CD8-positive, alpha-beta T cell (primary cell): ENCODE measurements at regions of chr1 and their contacts with region 1.

Region 1: GRCh38 chr1:61851849-61852669 is 109.8 kb downstream of the PATJ start:
- DNase-seq: peak in 3 of 9 experiments; percentile 17 to 74 (median 67)
- ATAC-seq: peak; percentile 46
- H3K4me3 ChIP-seq: no peak overlapping the region
- H3K4me3 Mint-ChIP-seq: no peak overlapping the region
- H3K27ac ChIP-seq: no peak overlapping the region
- H3K27ac Mint-ChIP-seq: no peak overlapping the region
- H3K4me1 ChIP-seq: no peaks in the 10 kb centered on the region
- H3K4me1 Mint-ChIP-seq: no peaks in the 10 kb centered on the region
- H3K27me3 ChIP-seq: no peaks in the 10 kb centered on the region
- H3K27me3 Mint-ChIP-seq: no peaks in the 10 kb centered on the region
- CTCF ChIP-seq: peak; percentile 94

Region 2: GRCh38 chr1:59971464-59971911 is 1880.6 kb before region 1 on chr1:
- CTCF ChIA-PET with region 1: no interaction called
- POLR2A ChIA-PET with region 1: no interaction called
- intact Hi-C with region 1: loop called in 1 of 2 experiments (anchors 5 kb)
- DNase-seq: peak in 7 of 9 experiments; percentile 15 to 64 (median 44)
- ATAC-seq: no peak
- H3K4me3 ChIP-seq: no peak overlapping the region
- H3K4me3 Mint-ChIP-seq: no peak overlapping the region
- H3K27ac ChIP-seq: no peak overlapping the region
- H3K27ac Mint-ChIP-seq: no peak overlapping the region
- H3K4me1 ChIP-seq: peaks cover 4% of the 10 kb centered on the region
- H3K4me1 Mint-ChIP-seq: peaks cover 7% of the 10 kb centered on the region
- H3K27me3 ChIP-seq: no peaks in the 10 kb centered on the region
- H3K27me3 Mint-ChIP-seq: peaks cover 14% of the 10 kb centered on the region
- CTCF ChIP-seq: peak; percentile 71

Region 3: DNA sequence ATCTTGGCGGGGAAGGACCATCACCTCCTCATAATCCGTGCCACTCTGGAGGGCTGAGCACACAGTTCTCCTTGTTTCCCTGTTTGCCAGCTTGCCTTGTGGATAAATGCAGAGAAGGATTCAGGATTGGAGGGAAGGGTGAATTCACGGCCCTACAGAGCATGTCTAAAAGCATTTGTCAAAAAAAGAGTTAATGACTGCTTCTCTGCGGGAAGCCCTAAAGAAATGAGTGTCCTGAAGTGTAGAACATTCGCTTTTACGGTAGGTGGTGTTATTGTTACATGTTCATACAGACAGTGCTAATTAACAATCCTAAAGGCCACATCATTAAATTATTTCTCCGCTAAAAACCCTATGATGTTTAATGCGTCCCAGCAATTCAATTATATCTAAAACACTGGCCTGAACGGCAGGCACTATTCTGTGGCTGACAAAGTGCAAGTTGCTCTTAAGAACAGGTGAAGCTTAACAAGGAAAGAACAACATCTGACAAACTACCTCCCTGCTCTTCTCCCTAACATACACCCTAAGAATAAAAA is 882.0 kb before region 1 on chr1:
- CTCF ChIA-PET with region 1: no interaction called
- POLR2A ChIA-PET with region 1: no interaction called
- intact Hi-C with region 1: loop called in 1 of 2 experiments (anchors 2 kb)
- DNase-seq: peak in 2 of 9 experiments; percentile 3 to 20
- ATAC-seq: no peak
- H3K4me3 ChIP-seq: no peak overlapping the region
- H3K4me3 Mint-ChIP-seq: no peak overlapping the region
- H3K27ac ChIP-seq: no peak overlapping the region
- H3K27ac Mint-ChIP-seq: no peak overlapping the region
- H3K4me1 ChIP-seq: no peaks in the 10 kb centered on the region
- H3K4me1 Mint-ChIP-seq: no peaks in the 10 kb centered on the region
- H3K27me3 ChIP-seq: no peaks in the 10 kb centered on the region
- H3K27me3 Mint-ChIP-seq: peaks cover 10% of the 10 kb centered on the region
- CTCF ChIP-seq: no peak

Region 4: DNA sequence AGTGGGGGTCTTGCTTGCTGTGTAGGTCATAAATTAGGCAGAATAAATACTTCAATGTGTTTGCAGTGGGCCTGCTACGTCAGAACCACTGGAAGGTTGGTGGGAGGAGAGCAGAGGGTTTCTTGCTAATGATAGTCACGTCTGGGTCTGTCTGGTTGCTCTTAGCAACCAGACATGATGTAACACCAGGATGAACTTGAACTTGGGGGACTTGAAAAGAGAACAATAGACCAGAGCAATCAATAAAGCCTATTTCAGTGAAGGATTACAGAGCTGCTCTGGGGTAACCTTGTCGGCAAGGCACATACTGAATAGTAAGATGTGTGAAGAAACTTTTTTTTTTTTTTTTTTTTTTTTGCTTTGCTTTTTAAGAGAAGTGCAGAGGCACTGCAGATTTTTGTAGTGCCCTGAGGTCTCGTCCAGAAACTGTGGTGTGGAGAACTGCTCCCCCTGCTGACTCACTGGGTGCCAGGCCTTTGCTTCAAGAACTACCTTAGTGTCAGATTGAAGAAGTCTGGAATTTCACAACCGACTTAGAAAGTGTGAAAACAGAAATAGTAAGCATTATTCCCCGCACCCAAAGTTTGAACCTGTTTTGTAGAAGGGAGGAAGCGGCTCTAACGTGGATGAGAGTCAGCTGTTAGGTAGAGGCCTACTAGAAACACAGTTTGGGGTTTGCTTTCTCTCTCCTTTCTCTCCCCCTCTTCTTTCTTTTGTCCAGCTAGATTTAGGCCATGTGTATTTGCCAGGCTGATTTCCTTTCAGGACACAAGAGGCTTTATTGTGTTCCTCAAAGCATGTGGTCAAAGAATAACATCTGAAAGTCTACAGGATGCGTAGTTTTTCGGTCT is 398.7 kb before region 1 on chr1:
- CTCF ChIA-PET with region 1: interaction called, 4 read pairs
- POLR2A ChIA-PET with region 1: no interaction called
- intact Hi-C with region 1: loop called in 1 of 2 experiments (anchors 2 kb)
- DNase-seq: peak; percentile 42 to 81 (median 69)
- ATAC-seq: peak; percentile 87
- H3K4me3 ChIP-seq: no peak overlapping the region
- H3K4me3 Mint-ChIP-seq: no peak overlapping the region
- H3K27ac ChIP-seq: no peak overlapping the region
- H3K27ac Mint-ChIP-seq: peak overlapping the region; percentile 71
- H3K4me1 ChIP-seq: no peaks in the 10 kb centered on the region
- H3K4me1 Mint-ChIP-seq: peaks cover 10% of the 10 kb centered on the region
- H3K27me3 ChIP-seq: no peaks in the 10 kb centered on the region
- H3K27me3 Mint-ChIP-seq: no peaks in the 10 kb centered on the region
- CTCF ChIP-seq: peak; percentile 57

Region 5: GRCh38 chr1:61588736-61589672 is 263.1 kb before region 1 on chr1:
- CTCF ChIA-PET with region 1: interaction called, 5 read pairs
- POLR2A ChIA-PET with region 1: no interaction called
- intact Hi-C with region 1: loop called in 1 of 2 experiments (anchors 2 kb)
- DNase-seq: peak; percentile 14 to 62 (median 39)
- ATAC-seq: peak; percentile 69
- H3K4me3 ChIP-seq: no peak overlapping the region
- H3K4me3 Mint-ChIP-seq: no peak overlapping the region
- H3K27ac ChIP-seq: no peak overlapping the region
- H3K27ac Mint-ChIP-seq: no peak overlapping the region
- H3K4me1 ChIP-seq: no peaks in the 10 kb centered on the region
- H3K4me1 Mint-ChIP-seq: no peaks in the 10 kb centered on the region
- H3K27me3 ChIP-seq: no peaks in the 10 kb centered on the region
- H3K27me3 Mint-ChIP-seq: peaks cover 8% of the 10 kb centered on the region
- CTCF ChIP-seq: peak; percentile 62

Region 6: GRCh38 chr1:61724813-61725694 is 127.0 kb before region 1 on chr1 and contains the start of gene TM2D1:
- CTCF ChIA-PET with region 1: no interaction called
- POLR2A ChIA-PET with region 1: no interaction called
- intact Hi-C with region 1: loop called in 1 of 2 experiments (anchors 10 kb)
- DNase-seq: peak; percentile 66 to 92 (median 84)
- ATAC-seq: peak; percentile 91
- H3K4me3 ChIP-seq: peak within 1 kb of the TSS; percentile 85 to 93
- H3K4me3 Mint-ChIP-seq: peak within 1 kb of the TSS; percentile 96
- H3K27ac ChIP-seq: peak within 1 kb of the TSS; percentile 85 to 89
- H3K27ac Mint-ChIP-seq: peak within 1 kb of the TSS; percentile 96
- H3K4me1 ChIP-seq: peaks cover 21% of the 10 kb centered on the region
- H3K4me1 Mint-ChIP-seq: peaks cover 34% of the 10 kb centered on the region
- H3K27me3 ChIP-seq: no peaks in the 10 kb centered on the region
- H3K27me3 Mint-ChIP-seq: no peaks in the 10 kb centered on the region
- CTCF ChIP-seq: no peak
- total RNA-seq, gene TM2D1: 12.7 to 14.8 TPM

Region 7: DNA sequence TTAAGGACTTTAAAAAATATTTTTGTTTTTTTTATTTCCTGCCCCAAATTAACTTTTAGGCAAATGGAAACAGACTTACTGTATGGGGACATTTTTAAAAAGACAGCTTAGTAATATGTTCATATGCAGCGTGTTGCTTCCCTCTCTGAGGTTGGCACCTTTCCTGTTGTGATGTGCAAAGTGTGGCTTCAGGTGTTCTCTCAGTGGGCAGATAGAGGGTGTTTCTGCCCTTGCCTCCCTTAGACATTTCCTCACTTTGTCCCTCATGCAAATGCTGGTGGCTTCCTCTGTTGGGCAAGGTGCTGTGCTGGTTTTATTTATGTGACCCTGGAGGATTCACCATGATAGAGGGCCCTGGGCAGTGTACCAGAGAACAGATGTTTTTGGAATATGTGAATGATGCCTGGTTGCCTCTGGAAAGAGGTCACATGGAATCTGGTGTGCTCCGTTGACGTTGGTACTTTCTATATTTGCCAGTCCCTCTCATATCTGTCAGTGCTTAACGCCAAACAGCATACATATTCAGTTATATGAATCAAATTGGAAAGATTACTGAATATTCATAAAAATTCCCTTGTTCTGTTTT is 13.7 kb after region 1 on chr1:
- CTCF ChIA-PET with region 1: no interaction called
- POLR2A ChIA-PET with region 1: no interaction called
- intact Hi-C with region 1: no loop called
- DNase-seq: no peak
- ATAC-seq: no peak
- H3K4me3 ChIP-seq: no peak overlapping the region
- H3K4me3 Mint-ChIP-seq: no peak overlapping the region
- H3K27ac ChIP-seq: no peak overlapping the region
- H3K27ac Mint-ChIP-seq: no peak overlapping the region
- H3K4me1 ChIP-seq: no peaks in the 10 kb centered on the region
- H3K4me1 Mint-ChIP-seq: no peaks in the 10 kb centered on the region
- H3K27me3 ChIP-seq: no peaks in the 10 kb centered on the region
- H3K27me3 Mint-ChIP-seq: no peaks in the 10 kb centered on the region
- CTCF ChIP-seq: no peak